Prostate gland (tissue), 2 donors: ENCODE measurements at regions of chr1 and their contacts with region 1.

Region 1: DNA sequence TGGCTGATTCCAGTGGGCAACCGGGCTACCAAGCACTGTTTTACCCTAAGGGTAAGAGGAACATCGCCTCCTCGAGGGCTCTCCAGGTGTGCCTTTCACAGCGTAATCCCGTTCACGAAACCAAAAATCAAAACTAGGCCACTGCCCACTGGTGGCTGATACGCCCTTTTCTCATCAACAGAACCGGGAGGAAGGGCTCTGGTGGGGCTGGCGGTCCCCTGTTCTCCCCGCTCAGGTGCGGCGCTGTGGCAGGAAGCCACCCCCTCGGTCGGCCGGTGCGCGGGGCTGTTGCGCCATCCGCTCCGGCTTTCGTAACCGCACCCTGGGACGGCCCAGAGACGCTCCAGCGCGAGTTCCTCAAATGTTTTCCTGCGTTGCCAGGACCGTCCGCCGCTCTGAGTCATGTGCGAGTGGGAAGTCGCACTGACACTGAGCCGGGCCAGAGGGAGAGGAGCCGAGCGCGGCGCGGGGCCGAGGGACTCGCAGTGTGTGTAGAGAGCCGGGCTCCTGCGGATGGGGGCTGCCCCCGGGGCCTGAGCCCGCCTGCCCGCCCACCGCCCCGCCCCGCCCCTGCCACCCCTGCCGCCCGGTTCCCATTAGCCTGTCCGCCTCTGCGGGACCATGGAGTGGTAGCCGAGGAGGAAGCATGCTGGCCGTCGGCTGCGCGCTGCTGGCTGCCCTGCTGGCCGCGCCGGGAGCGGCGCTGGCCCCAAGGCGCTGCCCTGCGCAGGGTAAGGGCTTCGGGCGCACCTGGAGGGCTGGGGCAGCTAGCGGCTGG is at the start of gene IL6R:
- DNase-seq: peak; percentile 94
- H3K4me3 ChIP-seq: peak within 1 kb of the TSS; percentile 66 to 84
- H3K27ac ChIP-seq: peak within 1 kb of the TSS; percentile 97 to 98
- H3K4me1 ChIP-seq: no peaks in the 10 kb centered on the region
- H3K27me3 ChIP-seq: no peaks in the 10 kb centered on the region
- CTCF ChIP-seq: peak; percentile 30 to 88 (median 80)
- POLR2A ChIP-seq: peak; percentile 87
- total RNA-seq, gene IL6R: 70.1 to 80.7 TPM

Region 2: DNA sequence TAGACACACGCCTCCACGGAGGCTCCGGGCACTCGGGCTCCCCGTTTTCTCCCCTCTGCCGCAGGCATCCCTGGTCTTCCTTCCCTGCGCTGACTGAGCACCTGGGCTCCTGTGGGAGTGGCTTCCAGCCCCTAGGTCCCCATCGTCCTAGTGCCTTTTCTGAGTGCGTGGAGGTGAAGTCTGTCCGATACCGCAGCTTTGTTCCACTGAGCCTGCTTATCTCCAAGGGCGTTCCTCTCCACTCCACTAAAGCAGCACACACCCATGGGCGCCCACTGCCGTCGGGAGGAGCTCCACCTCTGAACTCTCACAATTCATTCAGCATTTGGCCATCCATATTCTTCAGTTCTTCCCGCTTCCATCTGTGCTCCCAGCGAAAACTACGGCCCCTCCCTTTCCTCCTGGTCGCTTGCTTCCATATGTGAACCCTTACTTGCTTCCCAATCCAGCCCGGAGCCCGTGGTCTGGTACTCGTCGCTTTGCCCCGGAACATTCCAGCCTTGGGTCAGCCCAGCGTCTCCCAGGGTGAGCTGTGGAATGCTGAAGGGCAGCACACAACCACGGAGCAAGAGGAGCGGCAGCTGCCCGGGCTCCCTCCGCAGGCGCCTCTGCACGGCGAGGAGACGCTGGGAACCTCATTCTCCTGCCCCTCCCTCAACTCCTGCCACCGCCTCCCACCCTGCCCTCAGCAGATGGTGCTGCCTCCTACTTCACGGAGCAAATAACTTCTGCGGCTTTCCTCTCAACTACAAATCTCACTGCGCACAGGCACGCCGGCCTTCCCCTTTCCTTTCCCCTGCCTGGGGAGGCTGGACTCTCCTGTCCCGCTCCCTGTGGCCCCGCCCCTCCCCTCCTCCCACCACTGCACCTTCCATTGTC is 52.4 kb before region 1 on chr1:
- intact Hi-C with region 1: loop called (anchors 10 kb)
- DNase-seq: peak; percentile 32
- H3K4me3 ChIP-seq: peak overlapping the region; percentile 24 to 25
- H3K27ac ChIP-seq: peak overlapping the region; percentile 74 to 86
- H3K4me1 ChIP-seq: peaks cover 6% of the 10 kb centered on the region
- H3K27me3 ChIP-seq: no peaks in the 10 kb centered on the region
- CTCF ChIP-seq: no peak
- POLR2A ChIP-seq: peak; percentile 30

Region 3: GRCh38 chr1:154474802-154475201 is 69.6 kb after region 1 on chr1:
- intact Hi-C with region 1: no loop called
- DNase-seq: no peak
- H3K4me3 ChIP-seq: no peak overlapping the region
- H3K27ac ChIP-seq: no peak overlapping the region
- H3K4me1 ChIP-seq: no peaks in the 10 kb centered on the region
- H3K27me3 ChIP-seq: no peaks in the 10 kb centered on the region
- CTCF ChIP-seq: no peak
- POLR2A ChIP-seq: no peak